ENCODE measurements at regions of chr16 and their contacts with region 1.

Region 1: GRCh38 chr16:57244767-57245471 is at the start of gene ARL2BP:
- DNase-seq: peak; percentile 97 to 99
- H3K4me3 ChIP-seq: peak within 1 kb of the TSS; percentile 79 to 81
- H3K27ac ChIP-seq: peak within 1 kb of the TSS; percentile 92 to 96
- H3K4me1 ChIP-seq: peaks cover 2 to 12% of the 10 kb centered on the region in 2 donors
- H3K27me3 ChIP-seq: no peaks in the 10 kb centered on the region
- CTCF ChIP-seq: no peak
- total RNA-seq, gene ARL2BP: 44.1 TPM

Region 2: GRCh38 chr16:57084257-57084770 is 160.6 kb before region 1 on chr16:
- intact Hi-C with region 1: loop called (anchors 2 kb)
- DNase-seq: peak; percentile 26 to 85
- H3K4me3 ChIP-seq: no peak overlapping the region
- H3K27ac ChIP-seq: peak overlapping the region in 1 of 2 donors; percentile 37
- H3K4me1 ChIP-seq: peaks cover 0 to 6% of the 10 kb centered on the region in 2 donors
- H3K27me3 ChIP-seq: no peaks in the 10 kb centered on the region
- CTCF ChIP-seq: peak; percentile 90 to 98 (median 94)

Region 3: DNA sequence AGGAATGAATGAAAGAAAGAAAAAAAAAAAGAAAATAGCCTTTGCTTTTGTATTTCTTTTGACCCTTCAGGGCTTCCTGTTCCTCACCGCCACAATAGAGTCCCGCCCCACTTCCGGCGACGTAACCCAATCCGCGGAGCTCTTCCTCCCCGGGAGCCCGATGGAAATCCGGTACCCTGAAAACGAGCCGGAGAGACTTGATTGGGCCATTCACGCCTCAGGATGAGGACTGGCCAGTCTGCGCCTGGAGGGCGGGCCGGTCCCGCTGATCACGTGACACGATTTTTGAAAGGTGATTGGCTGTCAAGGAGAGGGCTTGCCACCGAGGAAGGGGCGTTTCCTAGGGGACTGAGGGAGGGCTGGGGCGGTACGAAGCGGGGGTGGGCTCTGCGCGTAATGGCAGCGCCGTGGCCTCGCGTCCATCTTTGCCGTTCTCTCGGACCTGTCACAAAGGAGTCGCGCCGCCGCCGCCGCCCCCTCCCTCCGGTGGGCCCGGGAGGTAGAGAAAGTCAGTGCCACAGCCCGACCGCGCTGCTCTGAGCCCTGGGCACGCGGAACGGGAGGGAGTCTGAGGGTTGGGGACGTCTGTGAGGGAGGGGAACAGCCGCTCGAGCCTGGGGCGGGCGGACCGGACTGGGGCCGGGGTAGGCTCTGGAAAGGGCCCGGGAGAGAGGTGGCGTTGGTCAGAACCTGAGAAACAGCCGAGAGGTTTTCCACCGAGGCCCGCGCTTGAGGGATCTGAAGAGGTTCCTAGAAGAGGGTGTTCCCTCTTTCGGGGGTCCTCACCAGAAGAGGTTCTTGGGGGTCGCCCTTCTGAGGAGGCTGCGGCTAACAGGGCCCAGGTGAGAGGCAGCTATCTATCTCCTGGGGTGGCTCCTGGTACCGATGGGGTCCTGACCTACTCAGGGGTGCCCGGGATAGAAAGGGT is 58.7 kb before region 1 on chr16 and contains the starts of genes PSME3IP1 and RSPRY1:
- intact Hi-C with region 1: loop called (anchors 1 kb)
- DNase-seq: peak; percentile 98 to 99
- H3K4me3 ChIP-seq: peak within 1 kb of the TSS; percentile 78 to 94
- H3K27ac ChIP-seq: peak within 1 kb of the TSS; percentile 95 to 96
- H3K4me1 ChIP-seq: peaks cover 5 to 33% of the 10 kb centered on the region in 2 donors
- H3K27me3 ChIP-seq: no peaks in the 10 kb centered on the region
- CTCF ChIP-seq: no peak
- total RNA-seq, gene PSME3IP1: 32.6 TPM
- total RNA-seq, gene RSPRY1: 29.3 TPM

Region 4: DNA sequence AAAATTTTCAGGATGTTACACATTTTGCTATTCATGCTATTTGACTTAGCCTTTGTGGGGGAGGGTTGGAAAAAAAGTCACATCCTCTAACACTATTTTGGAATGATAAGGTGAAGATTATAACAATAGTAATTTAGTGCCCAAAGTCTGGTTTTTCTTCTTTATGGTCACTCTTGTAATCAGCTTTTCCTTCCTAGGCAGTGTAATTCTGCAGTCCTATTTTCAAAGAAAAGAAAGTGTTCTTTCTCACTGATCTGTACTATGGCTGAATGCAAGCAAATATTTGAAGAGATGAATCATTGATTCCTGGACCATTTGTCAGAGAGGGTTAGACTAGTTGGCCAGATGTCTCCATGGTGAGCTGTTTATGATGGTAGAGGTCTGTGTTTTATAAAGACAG is 50.4 kb before region 1 on chr16:
- intact Hi-C with region 1: loop called (anchors 2 kb)
- DNase-seq: no peak
- H3K4me3 ChIP-seq: no peak overlapping the region
- H3K27ac ChIP-seq: peak overlapping the region; percentile 47 to 64
- H3K4me1 ChIP-seq: peaks cover 0 to 38% of the 10 kb centered on the region in 2 donors
- H3K27me3 ChIP-seq: no peaks in the 10 kb centered on the region
- CTCF ChIP-seq: no peak

Region 5: GRCh38 chr16:57372372-57373116 is 127.6 kb after region 1 on chr16 and contains the start of gene CX3CL1:
- intact Hi-C with region 1: loop called (anchors 5 kb)
- DNase-seq: peak in 1 of 2 donors; percentile 95
- H3K4me3 ChIP-seq: peak within 1 kb of the TSS; percentile 75 to 76
- H3K27ac ChIP-seq: peak within 1 kb of the TSS; percentile 94 to 99
- H3K4me1 ChIP-seq: peaks cover 16 to 37% of the 10 kb centered on the region in 2 donors
- H3K27me3 ChIP-seq: no peaks in the 10 kb centered on the region
- CTCF ChIP-seq: peak; percentile 20 to 56 (median 48)
- total RNA-seq, gene CX3CL1: 251 TPM

Region 6: DNA sequence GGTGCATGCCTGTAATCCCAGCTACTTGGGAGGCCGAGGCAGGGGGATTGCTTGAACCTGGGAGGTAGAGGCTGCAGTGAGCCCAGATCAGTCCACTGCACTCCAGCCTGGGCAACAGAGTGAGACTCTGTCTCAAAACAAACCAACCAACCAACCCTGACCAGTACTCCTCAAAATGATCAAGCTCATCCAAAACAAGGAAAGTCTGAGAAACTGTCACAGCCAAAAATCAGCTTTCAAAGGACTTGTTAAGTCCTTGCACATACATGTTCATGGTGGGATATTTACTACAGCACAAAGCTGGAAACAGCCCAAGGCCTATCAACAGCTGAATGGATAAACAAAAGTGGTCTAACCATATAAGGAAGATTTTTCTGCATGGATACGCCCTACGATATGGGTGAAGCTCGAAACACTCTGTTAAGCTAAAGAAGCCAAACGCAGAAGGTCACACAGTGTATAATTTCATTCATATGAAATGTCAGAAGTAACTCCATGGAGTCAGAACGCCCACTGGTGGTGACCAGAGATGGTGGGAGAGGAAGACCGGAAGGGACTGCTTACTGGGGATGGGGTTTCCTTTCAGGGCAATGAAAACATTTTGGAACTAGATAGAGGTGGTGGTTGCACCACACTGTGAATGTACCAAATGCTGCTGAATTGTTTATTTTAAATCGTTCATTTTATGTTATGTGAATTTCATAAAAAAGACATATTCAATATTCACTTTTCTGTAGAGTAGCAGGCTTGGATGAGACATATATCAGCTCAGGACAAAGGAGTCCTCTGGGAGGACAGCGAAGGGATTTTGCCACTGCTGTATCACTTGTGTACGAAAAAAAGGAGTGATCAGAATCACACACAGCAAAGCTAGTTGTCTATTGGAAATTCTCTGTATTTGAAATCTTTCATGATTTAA is 177.4 kb after region 1 on chr16:
- intact Hi-C with region 1: loop called (anchors 2 kb)
- DNase-seq: peak in 1 of 2 donors; percentile 83
- H3K4me3 ChIP-seq: no peak overlapping the region
- H3K27ac ChIP-seq: peak overlapping the region; percentile 28 to 58
- H3K4me1 ChIP-seq: peaks cover 0 to 24% of the 10 kb centered on the region in 2 donors
- H3K27me3 ChIP-seq: no peaks in the 10 kb centered on the region
- CTCF ChIP-seq: peak; percentile 71 to 87 (median 79)